Naive thymus-derived CD8-positive, alpha-beta T cell (primary cell): ENCODE measurements at regions of chr9 and their contacts with region 1.

Region 1: GRCh38 chr9:127555768-127556397 is 56.2 kb upstream of the STXBP1 start:
- DNase-seq: peak in 6 of 10 donors; percentile 19 to 40 (median 20)
- ATAC-seq: peak; percentile 74
- H3K4me3 Mint-ChIP-seq: peak overlapping the region; percentile 22 to 84 (median 74)
- H3K27ac Mint-ChIP-seq: peak overlapping the region; percentile 82 to 94 (median 90)
- H3K4me1 Mint-ChIP-seq: peaks cover 36 to 63% (median 53%) of the 10 kb centered on the region in 4 donors
- H3K27me3 Mint-ChIP-seq: no peaks in the 10 kb centered on the region

Region 2: GRCh38 chr9:127568971-127569885 is 13.3 kb after region 1 on chr9:
- POLR2A ChIA-PET with region 1: interaction called, 24 read pairs
- DNase-seq: peak; percentile 26 to 87 (median 67)
- ATAC-seq: peak; percentile 74 to 75
- H3K4me3 Mint-ChIP-seq: peak overlapping the region; percentile 77 to 91 (median 86)
- H3K27ac Mint-ChIP-seq: peak overlapping the region; percentile 45 to 93 (median 82)
- H3K4me1 Mint-ChIP-seq: peaks cover 15 to 30% (median 26%) of the 10 kb centered on the region in 4 donors
- H3K27me3 Mint-ChIP-seq: no peaks in the 10 kb centered on the region

Region 3: GRCh38 chr9:127707726-127708147 is 151.9 kb after region 1 on chr9:
- POLR2A ChIA-PET with region 1: no interaction called
- DNase-seq: peak in 2 of 10 donors; percentile 9 to 27
- ATAC-seq: peak; percentile 72 to 73
- H3K4me3 Mint-ChIP-seq: peak overlapping the region in 1 of 10 donors; percentile 15
- H3K27ac Mint-ChIP-seq: peak overlapping the region in 4 of 10 donors; percentile 27 to 87 (median 57)
- H3K4me1 Mint-ChIP-seq: peaks cover 15 to 32% (median 28%) of the 10 kb centered on the region in 4 donors
- H3K27me3 Mint-ChIP-seq: peaks cover 0 to 1% (median 0%) of the 10 kb centered on the region in 5 donors

Region 4: DNA sequence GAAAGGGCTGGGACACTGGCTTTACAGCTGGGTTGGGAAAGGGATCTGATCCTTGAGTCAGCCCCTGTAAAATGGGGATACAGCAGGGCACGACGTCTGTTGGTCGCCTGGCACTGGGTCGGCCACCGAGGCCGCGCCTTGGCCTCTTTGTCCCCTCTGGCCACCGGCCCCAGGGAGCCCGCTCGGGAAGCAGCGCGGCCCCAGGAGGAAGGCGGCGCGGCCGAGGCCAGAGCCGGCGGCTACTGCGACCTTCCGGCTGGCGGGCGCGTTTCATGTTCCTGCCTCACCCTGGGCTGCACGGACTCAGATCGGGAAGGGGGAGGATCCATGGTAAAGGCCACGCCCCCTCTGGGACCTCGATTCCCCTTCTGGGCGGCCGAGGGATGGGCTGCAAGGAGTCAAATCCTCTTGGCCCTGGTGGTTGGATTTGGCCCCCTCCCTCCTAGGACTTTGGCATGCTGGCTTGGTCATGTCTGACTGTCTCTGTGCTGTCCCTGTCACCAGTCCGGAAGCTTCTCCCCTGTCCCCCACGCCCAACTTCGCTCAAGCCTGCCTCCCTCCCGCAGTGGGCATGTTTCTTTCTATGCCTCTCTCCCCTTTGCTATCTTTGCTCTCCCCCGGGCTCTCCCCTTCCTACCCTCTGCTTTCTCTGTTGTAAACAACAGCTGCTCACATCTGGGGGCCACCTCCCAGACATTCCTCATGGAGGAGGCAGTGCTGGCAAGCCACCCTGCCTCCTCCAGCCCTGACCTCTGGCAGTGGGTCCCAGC is 272.6 kb after region 1 on chr9:
- POLR2A ChIA-PET with region 1: interaction called, 10 read pairs
- DNase-seq: no peak
- ATAC-seq: no peak
- H3K4me3 Mint-ChIP-seq: no peak overlapping the region
- H3K27ac Mint-ChIP-seq: peak overlapping the region in 7 of 10 donors; percentile 36 to 82 (median 66)
- H3K4me1 Mint-ChIP-seq: peaks cover 4 to 16% (median 11%) of the 10 kb centered on the region in 4 donors
- H3K27me3 Mint-ChIP-seq: no peaks in the 10 kb centered on the region